ENCODE measurements at regions of chr6 and their contacts with region 1.

Region 1: GRCh38 chr6:43369174-43370022 is at the start of gene ZNF318:
- DNase-seq: peak; percentile 85 to 95 (median 93)
- ATAC-seq: peak; percentile 97
- H3K4me3 ChIP-seq: peak within 1 kb of the TSS; percentile 90
- H3K4me3 Mint-ChIP-seq: peak within 1 kb of the TSS; percentile 75 to 97 (median 92)
- H3K27ac ChIP-seq: peak within 1 kb of the TSS; percentile 87
- H3K27ac Mint-ChIP-seq: peak within 1 kb of the TSS; percentile 91 to 98 (median 95)
- H3K4me1 ChIP-seq: peaks cover 20 to 23% of the 10 kb centered on the region in 2 donors
- H3K4me1 Mint-ChIP-seq: peaks cover 28 to 56% (median 50%) of the 10 kb centered on the region in 7 donors
- H3K27me3 ChIP-seq: no peaks in the 10 kb centered on the region
- H3K27me3 Mint-ChIP-seq: peaks cover 0 to 17% (median 0%) of the 10 kb centered on the region in 5 donors
- total RNA-seq, gene ZNF318: 15.8 to 40.2 (median 28.3) TPM

Region 2: DNA sequence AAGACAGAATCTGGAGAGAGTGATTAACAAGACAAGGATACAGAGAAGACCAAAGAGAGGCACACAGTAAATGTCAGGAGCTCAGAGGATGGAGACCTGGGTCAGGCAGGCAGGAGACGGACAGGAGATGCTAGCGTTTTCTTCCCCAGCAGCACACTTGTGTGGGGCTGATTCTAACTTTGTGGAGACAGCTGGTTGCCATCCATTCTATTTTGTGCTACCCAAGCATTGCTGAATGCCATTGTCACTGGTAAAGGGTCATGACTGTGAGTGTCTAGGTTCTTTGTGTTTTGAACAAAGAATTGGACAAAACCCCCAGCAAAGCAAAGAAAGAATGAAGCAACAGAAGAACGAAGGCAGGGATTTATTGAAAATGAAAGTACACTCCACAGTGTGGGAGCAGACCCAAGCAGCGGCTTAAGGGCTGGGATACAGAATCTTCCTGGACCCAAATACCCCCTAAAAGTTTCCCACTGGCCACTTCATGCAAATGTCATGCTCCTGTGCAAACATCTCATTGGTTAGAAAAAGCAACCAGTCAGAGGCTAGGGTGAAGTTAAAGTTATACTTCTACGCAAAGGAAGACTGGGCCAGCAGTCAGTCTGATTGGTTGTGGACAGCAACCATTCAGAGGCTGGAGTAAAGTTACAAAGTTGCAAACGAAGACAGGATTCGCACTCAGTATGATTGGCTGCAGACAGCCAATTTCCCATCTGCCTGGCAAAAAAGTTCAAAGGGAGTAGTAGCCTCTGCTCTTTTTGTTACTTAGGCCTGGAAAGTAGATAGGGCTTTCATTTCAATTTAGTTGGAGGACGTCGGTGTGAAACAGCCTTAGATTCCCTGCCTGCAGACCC is 275.7 kb before region 1 on chr6:
- CTCF ChIA-PET with region 1: no interaction called
- POLR2A ChIA-PET with region 1: no interaction called
- intact Hi-C with region 1: no loop called
- DNase-seq: peak in 1 of 9 donors; percentile 15
- ATAC-seq: peak; percentile 82
- H3K4me3 ChIP-seq: peak overlapping the region; percentile 33
- H3K4me3 Mint-ChIP-seq: peak overlapping the region; percentile 10 to 70 (median 44)
- H3K27ac ChIP-seq: no peak overlapping the region
- H3K27ac Mint-ChIP-seq: peak overlapping the region in 3 of 9 donors; percentile 34 to 64 (median 46)
- H3K4me1 ChIP-seq: no peaks in the 10 kb centered on the region
- H3K4me1 Mint-ChIP-seq: peaks cover 0 to 23% (median 5%) of the 10 kb centered on the region in 7 donors
- H3K27me3 ChIP-seq: no peaks in the 10 kb centered on the region
- H3K27me3 Mint-ChIP-seq: peaks cover 0 to 2% (median 0%) of the 10 kb centered on the region in 5 donors

Region 3: DNA sequence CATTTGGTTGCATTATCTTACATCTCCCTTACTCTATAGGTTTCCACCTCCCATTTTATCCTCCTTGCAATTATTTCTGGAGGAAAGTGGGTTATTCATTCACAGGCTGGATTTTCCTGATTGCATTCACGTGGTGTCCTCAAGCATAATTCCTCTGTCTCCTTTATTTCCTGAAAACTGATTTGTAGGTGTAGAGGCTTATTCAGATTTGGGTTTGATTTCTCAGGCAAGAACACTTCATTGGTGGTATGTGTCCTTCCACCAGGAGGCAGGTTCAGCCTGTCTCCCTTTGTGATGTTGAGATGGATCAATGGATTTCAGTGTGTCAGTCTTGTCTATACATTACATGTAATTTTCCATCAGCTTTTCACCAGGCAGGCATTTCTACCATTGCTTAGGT is 157.4 kb before region 1 on chr6:
- CTCF ChIA-PET with region 1: no interaction called
- POLR2A ChIA-PET with region 1: no interaction called
- intact Hi-C with region 1: no loop called
- DNase-seq: no peak
- ATAC-seq: no peak
- H3K4me3 ChIP-seq: no peak overlapping the region
- H3K4me3 Mint-ChIP-seq: no peak overlapping the region
- H3K27ac ChIP-seq: no peak overlapping the region
- H3K27ac Mint-ChIP-seq: peak overlapping the region in 1 of 9 donors; percentile 45
- H3K4me1 ChIP-seq: no peaks in the 10 kb centered on the region
- H3K4me1 Mint-ChIP-seq: peaks cover 0 to 3% (median 0%) of the 10 kb centered on the region in 7 donors
- H3K27me3 ChIP-seq: no peaks in the 10 kb centered on the region
- H3K27me3 Mint-ChIP-seq: no peaks in the 10 kb centered on the region

Region 4: GRCh38 chr6:43247113-43247999 is 122.0 kb before region 1 on chr6:
- CTCF ChIA-PET with region 1: no interaction called
- POLR2A ChIA-PET with region 1: no interaction called
- intact Hi-C with region 1: loop called in 1 of 2 experiments (anchors 1 kb)
- DNase-seq: peak; percentile 65 to 81 (median 78)
- ATAC-seq: peak; percentile 95
- H3K4me3 ChIP-seq: peak overlapping the region; percentile 84
- H3K4me3 Mint-ChIP-seq: peak overlapping the region in 9 of 10 donors; percentile 83 to 94 (median 88)
- H3K27ac ChIP-seq: peak overlapping the region; percentile 78
- H3K27ac Mint-ChIP-seq: peak overlapping the region; percentile 76 to 92 (median 89)
- H3K4me1 ChIP-seq: peaks cover 3 to 13% of the 10 kb centered on the region in 2 donors
- H3K4me1 Mint-ChIP-seq: peaks cover 11 to 26% (median 21%) of the 10 kb centered on the region in 7 donors
- H3K27me3 ChIP-seq: peaks cover 3 to 13% of the 10 kb centered on the region in 2 donors
- H3K27me3 Mint-ChIP-seq: peaks cover 7 to 33% (median 14%) of the 10 kb centered on the region in 5 donors

Region 5: DNA sequence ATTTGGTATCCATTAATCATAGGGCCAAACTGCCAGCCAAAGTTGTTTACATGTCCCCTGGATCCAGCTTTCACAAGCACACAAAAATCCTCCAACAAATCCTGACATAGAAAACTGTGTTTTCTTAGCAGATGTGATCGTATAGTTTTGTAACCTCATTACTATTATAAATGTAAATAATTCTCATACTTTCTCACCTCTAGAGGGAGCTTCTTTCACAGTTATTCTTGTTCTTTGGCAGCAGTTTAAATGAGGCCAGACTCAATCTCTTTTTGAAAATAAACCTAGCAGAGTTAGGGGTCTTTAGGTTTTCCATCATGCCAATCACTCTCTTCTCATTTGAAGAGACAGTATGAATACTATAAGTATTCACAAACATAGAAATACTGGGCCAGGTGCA is 17.1 kb after region 1 on chr6:
- CTCF ChIA-PET with region 1: interaction called, 33 read pairs
- POLR2A ChIA-PET with region 1: interaction called, 163 read pairs
- intact Hi-C with region 1: loop called (anchors 1 kb)
- DNase-seq: peak in 3 of 9 donors; percentile 43 to 64 (median 44)
- ATAC-seq: no peak
- H3K4me3 ChIP-seq: no peak overlapping the region
- H3K4me3 Mint-ChIP-seq: peak overlapping the region in 4 of 10 donors; percentile 23 to 63 (median 40)
- H3K27ac ChIP-seq: no peak overlapping the region
- H3K27ac Mint-ChIP-seq: peak overlapping the region in 8 of 9 donors; percentile 6 to 95 (median 73)
- H3K4me1 ChIP-seq: peaks cover 46 to 59% of the 10 kb centered on the region in 2 donors
- H3K4me1 Mint-ChIP-seq: peaks cover 54 to 78% (median 72%) of the 10 kb centered on the region in 7 donors
- H3K27me3 ChIP-seq: no peaks in the 10 kb centered on the region
- H3K27me3 Mint-ChIP-seq: peaks cover 0 to 67% (median 4%) of the 10 kb centered on the region in 5 donors

Region 6: GRCh38 chr6:43391440-43392031 is 22.1 kb after region 1 on chr6:
- CTCF ChIA-PET with region 1: interaction called, 4 read pairs
- POLR2A ChIA-PET with region 1: interaction called, 16 read pairs
- intact Hi-C with region 1: no loop called
- DNase-seq: peak in 7 of 9 donors; percentile 29 to 54 (median 37)
- ATAC-seq: peak; percentile 78
- H3K4me3 ChIP-seq: peak overlapping the region; percentile 15
- H3K4me3 Mint-ChIP-seq: peak overlapping the region; percentile 54 to 85 (median 76)
- H3K27ac ChIP-seq: no peak overlapping the region
- H3K27ac Mint-ChIP-seq: peak overlapping the region in 7 of 9 donors; percentile 5 to 85 (median 70)
- H3K4me1 ChIP-seq: peaks cover 18 to 30% of the 10 kb centered on the region in 2 donors
- H3K4me1 Mint-ChIP-seq: peaks cover 30 to 57% (median 46%) of the 10 kb centered on the region in 7 donors
- H3K27me3 ChIP-seq: no peaks in the 10 kb centered on the region
- H3K27me3 Mint-ChIP-seq: peaks cover 0 to 78% (median 8%) of the 10 kb centered on the region in 5 donors

Region 7: GRCh38 chr6:43477235-43478007 is 108.0 kb after region 1 on chr6 and contains the start of gene TJAP1:
- CTCF ChIA-PET with region 1: no interaction called
- POLR2A ChIA-PET with region 1: no interaction called
- intact Hi-C with region 1: loop called in 1 of 2 experiments (anchors 1 kb)
- DNase-seq: peak; percentile 89 to 99 (median 95)
- ATAC-seq: peak; percentile 100
- H3K4me3 ChIP-seq: peak within 1 kb of the TSS; percentile 83
- H3K4me3 Mint-ChIP-seq: peak within 1 kb of the TSS; percentile 87 to 99 (median 93)
- H3K27ac ChIP-seq: peak within 1 kb of the TSS; percentile 96
- H3K27ac Mint-ChIP-seq: peak within 1 kb of the TSS; percentile 90 to 98 (median 96)
- H3K4me1 ChIP-seq: peaks cover 10 to 16% of the 10 kb centered on the region in 2 donors
- H3K4me1 Mint-ChIP-seq: peaks cover 37 to 54% (median 51%) of the 10 kb centered on the region in 7 donors
- H3K27me3 ChIP-seq: no peaks in the 10 kb centered on the region
- H3K27me3 Mint-ChIP-seq: no peaks in the 10 kb centered on the region
- total RNA-seq, gene TJAP1: 29.2 to 55.2 (median 33.5) TPM

Region 8: GRCh38 chr6:43506667-43507471 is 137.5 kb after region 1 on chr6:
- CTCF ChIA-PET with region 1: no interaction called
- POLR2A ChIA-PET with region 1: interaction called, 3 read pairs
- intact Hi-C with region 1: loop called (anchors 5 kb)
- DNase-seq: peak; percentile 61 to 82 (median 70)
- ATAC-seq: peak; percentile 84
- H3K4me3 ChIP-seq: no peak overlapping the region
- H3K4me3 Mint-ChIP-seq: peak overlapping the region in 1 of 10 donors; percentile 29
- H3K27ac ChIP-seq: no peak overlapping the region
- H3K27ac Mint-ChIP-seq: peak overlapping the region in 5 of 9 donors; percentile 24 to 69 (median 58)
- H3K4me1 ChIP-seq: peaks cover 0 to 4% of the 10 kb centered on the region in 2 donors
- H3K4me1 Mint-ChIP-seq: peaks cover 10 to 29% (median 20%) of the 10 kb centered on the region in 7 donors
- H3K27me3 ChIP-seq: peaks cover 0 to 9% of the 10 kb centered on the region in 2 donors
- H3K27me3 Mint-ChIP-seq: peaks cover 15 to 22% (median 19%) of the 10 kb centered on the region in 5 donors

Region 9: DNA sequence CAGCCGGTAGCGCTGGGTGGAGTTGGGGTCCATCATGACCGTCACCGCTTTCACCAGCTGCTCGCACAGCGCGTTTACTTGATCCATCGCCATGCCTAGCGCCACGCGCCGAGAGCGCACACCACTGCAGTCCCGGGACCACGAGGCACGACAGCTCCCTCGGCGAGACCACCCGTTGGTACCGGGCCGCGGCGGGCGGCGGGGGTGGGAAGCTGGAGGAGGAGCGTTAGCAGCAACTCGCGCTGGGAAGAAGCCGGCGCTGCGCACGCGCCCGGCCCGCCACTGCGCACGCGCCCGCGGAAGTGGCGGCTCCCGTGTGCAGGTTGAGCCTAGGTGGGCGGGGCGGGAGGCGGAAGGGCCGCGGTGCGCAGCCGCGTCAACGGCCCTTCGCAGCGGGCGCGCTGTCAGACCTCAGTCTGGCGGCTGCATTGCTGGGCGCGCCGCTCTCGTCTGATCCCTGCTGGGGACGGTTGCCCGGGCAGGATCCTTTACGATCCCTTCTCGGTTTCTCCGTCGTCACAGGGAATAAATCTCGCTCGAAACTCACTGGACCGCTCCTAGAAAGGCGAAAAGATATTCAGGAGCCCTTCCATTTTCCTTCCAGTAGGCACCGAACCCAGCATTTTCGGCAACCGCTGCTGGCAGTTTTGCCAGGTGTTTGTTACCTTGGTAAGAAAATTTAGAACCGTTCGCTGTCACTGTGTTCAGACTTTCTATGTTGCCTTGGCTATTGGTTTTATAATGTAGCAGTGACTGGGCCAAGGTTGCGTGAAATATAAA is 206.6 kb after region 1 on chr6 and contains the starts of genes POLH and XPO5:
- CTCF ChIA-PET with region 1: no interaction called
- POLR2A ChIA-PET with region 1: no interaction called
- intact Hi-C with region 1: loop called in 1 of 2 experiments (anchors 5 kb)
- DNase-seq: peak; percentile 83 to 94 (median 88)
- ATAC-seq: peak; percentile 99
- H3K4me3 ChIP-seq: peak within 1 kb of the TSS; percentile 77
- H3K4me3 Mint-ChIP-seq: peak within 1 kb of the TSS; percentile 90 to 100 (median 98)
- H3K27ac ChIP-seq: peak within 1 kb of the TSS; percentile 89
- H3K27ac Mint-ChIP-seq: peak within 1 kb of the TSS; percentile 78 to 94 (median 92)
- H3K4me1 ChIP-seq: peaks cover 20 to 21% of the 10 kb centered on the region in 2 donors
- H3K4me1 Mint-ChIP-seq: peaks cover 21 to 61% (median 40%) of the 10 kb centered on the region in 7 donors
- H3K27me3 ChIP-seq: no peaks in the 10 kb centered on the region
- H3K27me3 Mint-ChIP-seq: no peaks in the 10 kb centered on the region
- total RNA-seq, gene POLH: 9.1 to 65.6 (median 19.3) TPM
- total RNA-seq, gene XPO5: 35.0 to 107 (median 41.9) TPM

Region 10: GRCh38 chr6:43702534-43703440 is 333.4 kb after region 1 on chr6:
- CTCF ChIA-PET with region 1: no interaction called
- POLR2A ChIA-PET with region 1: no interaction called
- intact Hi-C with region 1: no loop called
- DNase-seq: no peak
- ATAC-seq: peak; percentile 85
- H3K4me3 ChIP-seq: no peak overlapping the region
- H3K4me3 Mint-ChIP-seq: peak overlapping the region in 1 of 10 donors; percentile 29
- H3K27ac ChIP-seq: no peak overlapping the region
- H3K27ac Mint-ChIP-seq: no peak overlapping the region
- H3K4me1 ChIP-seq: no peaks in the 10 kb centered on the region
- H3K4me1 Mint-ChIP-seq: peaks cover 0 to 11% (median 0%) of the 10 kb centered on the region in 7 donors
- H3K27me3 ChIP-seq: no peaks in the 10 kb centered on the region
- H3K27me3 Mint-ChIP-seq: peaks cover 24 to 45% (median 25%) of the 10 kb centered on the region in 5 donors